ENCODE measurements at regions of chr1 and their contacts with region 1.

Region 1: DNA sequence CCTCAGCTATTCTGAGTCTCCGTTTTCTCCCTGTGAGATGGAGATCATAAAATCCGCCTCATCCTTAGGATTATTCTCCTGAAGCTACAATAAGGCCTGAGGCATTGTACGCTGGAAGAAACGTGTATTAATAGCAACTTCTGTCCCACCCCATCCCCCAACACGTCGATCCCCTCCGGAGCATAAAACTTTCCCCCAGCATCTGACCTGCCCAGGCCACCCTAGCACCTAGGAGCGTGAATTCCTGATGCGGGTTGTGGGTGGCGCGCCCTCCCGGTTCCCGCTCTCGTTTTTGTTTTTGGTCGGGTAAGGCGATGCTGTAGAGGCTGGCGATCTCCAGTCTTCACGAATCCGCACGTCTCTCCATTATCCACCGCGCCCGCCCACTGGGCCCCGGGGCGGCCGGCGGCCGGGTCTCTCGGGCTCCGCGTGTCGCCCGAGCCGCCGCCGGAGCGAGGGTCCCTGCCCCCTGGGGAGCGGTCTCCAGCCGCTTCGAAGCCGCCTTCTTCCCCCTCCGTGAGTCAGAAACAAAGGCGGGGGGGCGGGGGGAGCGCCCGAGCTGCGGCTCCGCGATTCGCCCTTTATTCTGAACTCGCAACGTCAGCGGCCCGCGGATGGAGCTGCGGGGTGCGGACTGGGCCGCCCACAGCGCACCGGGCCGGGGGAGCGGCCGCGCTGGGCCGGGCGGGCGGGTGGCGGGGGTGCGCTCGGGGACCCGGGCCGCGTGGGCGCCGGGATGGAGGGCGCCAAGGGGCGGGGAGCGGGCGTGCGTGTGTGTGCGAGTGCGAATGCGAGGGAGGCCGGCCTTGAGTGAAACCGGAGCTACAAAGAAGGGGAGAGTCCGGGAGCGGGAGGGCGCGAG is at the start of gene PLEKHO1:
- DNase-seq: no peak
- ATAC-seq: peak; percentile 86
- H3K4me3 ChIP-seq: peak within 1 kb of the TSS; percentile 56 to 66
- H3K27ac ChIP-seq: peak within 1 kb of the TSS; percentile 31; the same call in 1 of the 2 replicates
- H3K4me1 ChIP-seq: peaks cover 11% of the 10 kb centered on the region
- H3K27me3 ChIP-seq: no peaks in the 10 kb centered on the region
- CTCF ChIP-seq: no peak
- total RNA-seq, gene PLEKHO1: 9.1 TPM

Region 2: GRCh38 chr1:149986486-149987294 is 162.8 kb before region 1 on chr1:
- CTCF ChIA-PET with region 1: interaction called, 19 read pairs
- POLR2A ChIA-PET with region 1: no interaction called
- in situ Hi-C with region 1: no loop called
- intact Hi-C with region 1: no loop called
- DNase-seq: no peak
- ATAC-seq: no peak
- H3K4me3 ChIP-seq: no peak overlapping the region
- H3K27ac ChIP-seq: no peak overlapping the region
- H3K4me1 ChIP-seq: no peaks in the 10 kb centered on the region
- H3K27me3 ChIP-seq: no peaks in the 10 kb centered on the region
- CTCF ChIP-seq: no peak

Region 3: DNA sequence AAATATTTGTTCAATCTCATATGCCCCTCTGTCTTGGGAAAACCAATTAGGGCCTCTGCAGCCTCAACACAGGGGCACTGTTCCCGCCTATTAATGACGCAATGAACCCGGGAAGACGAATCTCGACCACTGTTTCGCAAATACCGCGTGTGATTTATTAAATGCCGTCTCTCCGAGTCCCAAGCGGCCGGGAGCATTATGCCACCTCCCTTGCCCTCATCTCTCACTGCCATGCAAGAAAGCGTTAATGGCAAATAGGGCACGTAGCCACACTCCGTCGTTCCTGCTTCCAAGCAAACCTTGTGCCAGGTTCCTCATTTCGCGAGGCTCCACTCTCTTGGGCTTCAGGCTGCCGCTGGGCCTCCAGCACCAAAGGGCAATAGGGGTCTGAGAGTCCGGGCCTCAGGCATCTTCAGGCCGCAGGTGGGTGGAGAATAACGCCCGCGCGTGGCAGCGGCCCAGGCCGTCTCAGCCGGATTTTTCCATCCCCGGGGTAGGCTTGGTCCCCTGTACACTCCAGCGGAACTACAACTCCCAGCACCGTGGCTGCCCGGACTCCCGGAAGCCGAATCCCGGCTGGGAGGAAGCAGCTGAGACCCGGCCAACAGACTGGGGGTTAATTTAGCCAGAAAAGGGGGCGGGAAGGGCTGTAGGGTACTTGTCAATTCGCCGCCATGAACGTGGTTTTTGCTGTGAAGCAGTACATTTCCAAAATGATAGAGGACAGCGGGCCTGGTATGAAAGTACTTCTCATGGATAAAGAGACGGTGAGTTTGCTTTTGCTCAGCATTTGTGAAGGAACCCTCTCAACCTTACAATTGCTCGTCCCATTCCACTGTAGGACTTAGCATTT is 82.1 kb before region 1 on chr1 and contains the start of gene VPS45:
- CTCF ChIA-PET with region 1: no interaction called
- POLR2A ChIA-PET with region 1: no interaction called
- in situ Hi-C with region 1: no loop called
- intact Hi-C with region 1: no loop called
- DNase-seq: peak; percentile 79
- ATAC-seq: peak; percentile 99
- H3K4me3 ChIP-seq: peak within 1 kb of the TSS; percentile 89 to 92
- H3K27ac ChIP-seq: peak within 1 kb of the TSS; percentile 99
- H3K4me1 ChIP-seq: peaks cover 8% of the 10 kb centered on the region; the same call in 1 of the 2 replicates
- H3K27me3 ChIP-seq: no peaks in the 10 kb centered on the region
- CTCF ChIP-seq: no peak
- total RNA-seq, gene VPS45: 24.9 TPM